H1 (cell line): ENCODE measurements at regions of chr13 and their contacts with region 1.

Region 1: DNA sequence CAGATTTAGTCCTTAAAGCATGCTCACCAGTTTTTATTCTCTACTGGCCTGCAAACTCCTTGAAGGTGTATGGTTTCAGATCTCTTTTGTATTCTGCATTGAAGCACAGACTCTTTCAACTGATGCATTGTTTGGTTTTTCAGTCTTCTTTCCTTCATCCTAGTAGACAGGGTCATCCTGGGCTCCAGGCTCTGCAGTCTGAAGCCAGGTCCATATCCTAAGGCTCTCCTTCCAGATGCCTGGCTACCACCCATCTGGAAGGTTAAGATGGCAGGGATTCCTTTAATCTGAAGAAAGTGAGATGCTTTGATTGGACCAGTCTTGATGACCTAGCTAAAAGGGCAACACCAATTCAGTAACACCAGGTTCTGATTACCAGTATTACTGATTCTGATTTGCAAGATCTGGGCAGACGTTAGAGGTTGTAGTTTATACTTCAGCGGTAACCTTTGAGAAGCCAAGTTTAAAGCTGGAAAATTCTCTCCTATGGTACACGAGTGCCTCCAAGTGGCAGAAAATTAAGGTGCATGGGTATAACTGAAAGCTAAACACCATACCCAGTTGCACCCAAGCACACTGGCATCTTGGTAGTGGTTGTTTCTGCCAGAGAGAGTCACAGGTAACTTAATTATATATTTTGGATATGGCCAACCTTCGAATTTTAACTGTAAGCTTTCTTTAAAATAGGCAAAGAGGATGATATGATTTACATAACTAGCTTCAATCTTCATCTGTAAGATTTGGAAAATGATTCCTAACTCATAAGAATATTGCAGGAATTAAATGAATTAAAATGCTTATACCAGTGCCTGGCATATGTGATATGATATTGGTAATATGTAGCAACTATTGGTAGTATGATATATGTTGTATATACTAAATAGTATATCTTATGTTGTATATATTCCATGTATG is 1651.9 kb upstream of the MIR17HG start:
- DNase-seq: peak; percentile 25 to 82
- H3K4me3 ChIP-seq: no peak overlapping the region
- H3K27ac ChIP-seq: no peak overlapping the region
- H3K4me1 ChIP-seq: 0 out of 7 replicates have a peak, but pooled peaks cover 0 to 1% (median 0%) of the 10 kb centered on the region in 4 experiments
- H3K27me3 ChIP-seq: no peaks in the 10 kb centered on the region
- CTCF ChIP-seq: peak in 2 of 3 experiments; percentile 71 to 80; a peak in 3 of 4 replicates
- EP300 ChIP-seq: no peak
- POLR2A ChIP-seq: no peak
- RAD21 ChIP-seq: peak; percentile 95 to 96

Region 2: GRCh38 chr13:89432997-89433396 is 262.6 kb before region 1 on chr13:
- CTCF ChIA-PET with region 1: interaction called, 10 read pairs
- POLR2A ChIA-PET with region 1: no interaction called
- DNase-seq: no peak
- H3K4me3 ChIP-seq: no peak overlapping the region
- H3K27ac ChIP-seq: no peak overlapping the region
- H3K4me1 ChIP-seq: no peaks in the 10 kb centered on the region
- H3K27me3 ChIP-seq: no peaks in the 10 kb centered on the region
- CTCF ChIP-seq: no peak
- EP300 ChIP-seq: no peak
- POLR2A ChIP-seq: no peak
- RAD21 ChIP-seq: no peak

Region 3: DNA sequence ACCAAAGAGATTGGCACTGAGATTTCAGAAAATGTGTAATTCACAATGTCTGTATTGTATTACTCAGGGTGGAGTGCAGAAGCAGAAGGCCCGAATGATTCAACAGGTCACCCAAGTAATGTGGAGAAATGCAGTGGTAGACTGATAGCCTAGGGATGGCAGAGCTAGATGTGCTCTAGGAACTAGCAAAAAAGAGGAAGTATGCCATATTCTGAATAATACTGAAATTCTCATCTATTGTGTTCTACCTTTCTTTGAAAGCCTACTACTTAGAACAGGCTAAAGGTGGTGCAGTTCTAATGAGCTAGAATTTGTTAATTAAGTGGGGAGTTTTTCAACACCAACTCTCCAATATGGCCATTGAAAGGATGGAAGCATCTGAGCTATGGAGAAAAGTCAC is 202.1 kb after region 1 on chr13:
- CTCF ChIA-PET with region 1: no interaction called
- POLR2A ChIA-PET with region 1: no interaction called
- DNase-seq: no peak
- H3K4me3 ChIP-seq: no peak overlapping the region
- H3K27ac ChIP-seq: no peak overlapping the region
- H3K4me1 ChIP-seq: no peaks in the 10 kb centered on the region
- H3K27me3 ChIP-seq: no peaks in the 10 kb centered on the region
- CTCF ChIP-seq: no peak
- EP300 ChIP-seq: no peak
- POLR2A ChIP-seq: no peak
- RAD21 ChIP-seq: no peak